ENCODE measurements at regions of chr6 and their contacts with region 1.

Region 1: GRCh38 chr6:89297695-89298351 is 17.3 kb downstream of the GABRR2 start:
- DNase-seq: peak; percentile 97
- H3K4me3 ChIP-seq: peak overlapping the region in 1 of 3 experiments; percentile 47
- H3K27ac ChIP-seq: peak overlapping the region; percentile 84
- H3K4me1 ChIP-seq: peaks cover 28% of the 10 kb centered on the region
- H3K27me3 ChIP-seq: no peaks in the 10 kb centered on the region
- CTCF ChIP-seq: no peak
- POLR2A ChIP-seq: no peak

Region 2: DNA sequence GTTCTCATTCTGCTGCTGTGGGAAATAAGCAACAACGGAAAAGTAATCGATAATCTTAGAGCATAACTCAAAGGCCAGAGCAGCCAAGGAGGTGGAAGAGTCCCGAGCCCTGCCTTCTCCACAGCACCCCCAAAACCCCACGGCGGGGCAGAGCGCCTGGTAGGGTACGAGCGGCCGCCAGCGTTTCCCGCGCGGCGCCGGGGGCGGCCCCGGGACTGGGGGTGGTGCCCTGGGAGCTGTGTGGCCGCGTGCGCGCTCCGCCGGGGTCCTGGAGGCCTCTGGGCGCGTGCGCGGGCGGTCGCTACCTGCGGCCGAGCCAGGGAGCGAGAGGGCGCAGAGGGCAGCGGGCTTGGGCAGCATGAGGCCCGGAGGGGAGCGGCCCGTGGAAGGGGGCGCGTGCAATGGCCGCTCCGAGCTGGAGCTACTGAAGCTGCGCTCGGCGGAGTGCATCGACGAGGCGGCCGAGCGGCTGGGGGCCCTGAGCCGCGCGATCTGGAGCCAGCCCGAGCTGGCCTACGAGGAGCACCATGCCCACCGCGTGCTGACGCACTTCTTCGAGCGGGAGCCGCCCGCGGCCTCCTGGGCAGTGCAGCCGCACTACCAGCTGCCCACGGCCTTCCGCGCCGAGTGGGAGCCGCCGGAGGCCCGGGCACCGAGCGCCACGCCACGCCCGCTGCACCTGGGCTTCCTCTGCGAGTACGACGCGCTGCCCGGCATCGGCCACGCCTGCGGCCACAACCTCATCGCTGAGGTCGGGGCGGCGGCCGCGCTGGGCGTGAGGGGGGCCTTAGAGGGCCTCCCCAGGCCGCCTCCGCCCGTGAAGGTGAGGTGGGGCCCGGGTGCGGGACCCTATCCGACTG is 151.8 kb before region 1 on chr6 and contains the start of gene PM20D2:
- CTCF ChIA-PET with region 1: interaction called, 6 read pairs
- POLR2A ChIA-PET with region 1: no interaction called
- dilution Hi-C with region 1: no loop called
- intact Hi-C with region 1: loop called (anchors 2 kb)
- DNase-seq: peak; percentile 63
- H3K4me3 ChIP-seq: peak within 1 kb of the TSS; percentile 52 to 83 (median 79)
- H3K27ac ChIP-seq: peak within 1 kb of the TSS; percentile 72
- H3K4me1 ChIP-seq: peaks cover 10% of the 10 kb centered on the region
- H3K27me3 ChIP-seq: peaks cover 5 to 7% of the 10 kb centered on the region in 2 experiments
- CTCF ChIP-seq: no peak
- POLR2A ChIP-seq: peak; percentile 44
- total RNA-seq, gene PM20D2: 8.3 and 10.9 TPM in 2 replicates

Region 3: DNA sequence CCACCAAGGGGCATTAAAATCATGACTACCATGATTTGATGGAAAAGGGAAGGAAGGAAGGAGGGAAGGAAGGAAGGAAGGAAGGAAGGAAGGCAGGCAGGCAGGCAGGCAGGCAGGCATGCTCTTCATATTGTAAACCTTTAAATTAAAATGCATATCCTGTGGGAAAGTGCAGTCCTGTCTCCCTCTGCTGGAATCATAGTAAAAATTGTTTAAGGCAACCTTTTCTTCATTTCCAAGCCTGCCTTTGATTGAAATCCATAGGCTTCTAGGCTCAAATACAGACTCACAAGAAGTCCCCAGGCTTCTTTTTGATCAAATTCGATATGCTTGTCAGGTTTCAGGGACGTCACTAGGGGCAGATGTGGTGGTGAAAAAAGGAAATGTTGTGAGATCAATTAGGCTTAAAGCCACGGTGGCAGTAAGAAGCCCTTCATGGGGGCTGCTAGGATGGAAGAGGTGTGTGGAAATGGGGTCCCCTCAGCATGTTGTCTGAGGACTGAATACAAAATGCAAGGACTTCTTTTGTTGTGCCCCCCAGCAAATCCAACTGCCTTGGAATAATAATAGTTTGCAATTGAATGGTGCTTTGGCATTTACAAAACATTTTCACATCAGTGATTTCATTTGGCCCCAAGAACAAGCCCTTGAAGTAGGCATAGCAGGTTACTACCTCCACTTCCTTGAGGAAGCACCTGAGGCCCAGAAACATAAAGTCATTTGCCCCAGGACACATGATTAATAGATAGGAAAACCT is 55.1 kb before region 1 on chr6:
- CTCF ChIA-PET with region 1: interaction called, 4 read pairs
- POLR2A ChIA-PET with region 1: no interaction called
- dilution Hi-C with region 1: no loop called
- intact Hi-C with region 1: loop called (anchors 2 kb)
- DNase-seq: peak; percentile 60
- H3K4me3 ChIP-seq: no peak overlapping the region
- H3K27ac ChIP-seq: no peak overlapping the region
- H3K4me1 ChIP-seq: no peaks in the 10 kb centered on the region
- H3K27me3 ChIP-seq: peaks cover 16 to 23% of the 10 kb centered on the region in 2 experiments
- CTCF ChIP-seq: peak; percentile 36 to 43
- POLR2A ChIP-seq: no peak

Region 4: GRCh38 chr6:89254569-89254968 is 43.3 kb before region 1 on chr6:
- CTCF ChIA-PET with region 1: interaction called, 3 read pairs
- POLR2A ChIA-PET with region 1: no interaction called
- dilution Hi-C with region 1: no loop called
- intact Hi-C with region 1: loop called (anchors 1 kb)
- DNase-seq: peak; percentile 75
- H3K4me3 ChIP-seq: no peak overlapping the region
- H3K27ac ChIP-seq: peak overlapping the region; percentile 34
- H3K4me1 ChIP-seq: peaks cover 24% of the 10 kb centered on the region
- H3K27me3 ChIP-seq: no peaks in the 10 kb centered on the region
- CTCF ChIP-seq: no peak
- POLR2A ChIP-seq: no peak

Region 5: GRCh38 chr6:89281779-89282246 is 16.0 kb before region 1 on chr6:
- CTCF ChIA-PET with region 1: interaction called, 14 read pairs
- POLR2A ChIA-PET with region 1: no interaction called
- dilution Hi-C with region 1: no loop called
- intact Hi-C with region 1: no loop called
- DNase-seq: peak; percentile 47
- H3K4me3 ChIP-seq: no peak overlapping the region
- H3K27ac ChIP-seq: no peak overlapping the region
- H3K4me1 ChIP-seq: no peaks in the 10 kb centered on the region
- H3K27me3 ChIP-seq: peaks cover 0 to 2% of the 10 kb centered on the region in 2 experiments
- CTCF ChIP-seq: peak; percentile 67 to 69
- POLR2A ChIP-seq: no peak

Region 6: GRCh38 chr6:89311853-89312531 is 14.2 kb after region 1 on chr6:
- CTCF ChIA-PET with region 1: interaction called, 47 read pairs
- POLR2A ChIA-PET with region 1: interaction called, 8 read pairs
- dilution Hi-C with region 1: no loop called
- intact Hi-C with region 1: loop called (anchors 1 kb)
- DNase-seq: peak; percentile 95
- H3K4me3 ChIP-seq: no peak overlapping the region
- H3K27ac ChIP-seq: peak overlapping the region; percentile 67
- H3K4me1 ChIP-seq: peaks cover 22% of the 10 kb centered on the region
- H3K27me3 ChIP-seq: no peaks in the 10 kb centered on the region
- CTCF ChIP-seq: peak; percentile 51 to 81
- POLR2A ChIP-seq: no peak

Region 7: DNA sequence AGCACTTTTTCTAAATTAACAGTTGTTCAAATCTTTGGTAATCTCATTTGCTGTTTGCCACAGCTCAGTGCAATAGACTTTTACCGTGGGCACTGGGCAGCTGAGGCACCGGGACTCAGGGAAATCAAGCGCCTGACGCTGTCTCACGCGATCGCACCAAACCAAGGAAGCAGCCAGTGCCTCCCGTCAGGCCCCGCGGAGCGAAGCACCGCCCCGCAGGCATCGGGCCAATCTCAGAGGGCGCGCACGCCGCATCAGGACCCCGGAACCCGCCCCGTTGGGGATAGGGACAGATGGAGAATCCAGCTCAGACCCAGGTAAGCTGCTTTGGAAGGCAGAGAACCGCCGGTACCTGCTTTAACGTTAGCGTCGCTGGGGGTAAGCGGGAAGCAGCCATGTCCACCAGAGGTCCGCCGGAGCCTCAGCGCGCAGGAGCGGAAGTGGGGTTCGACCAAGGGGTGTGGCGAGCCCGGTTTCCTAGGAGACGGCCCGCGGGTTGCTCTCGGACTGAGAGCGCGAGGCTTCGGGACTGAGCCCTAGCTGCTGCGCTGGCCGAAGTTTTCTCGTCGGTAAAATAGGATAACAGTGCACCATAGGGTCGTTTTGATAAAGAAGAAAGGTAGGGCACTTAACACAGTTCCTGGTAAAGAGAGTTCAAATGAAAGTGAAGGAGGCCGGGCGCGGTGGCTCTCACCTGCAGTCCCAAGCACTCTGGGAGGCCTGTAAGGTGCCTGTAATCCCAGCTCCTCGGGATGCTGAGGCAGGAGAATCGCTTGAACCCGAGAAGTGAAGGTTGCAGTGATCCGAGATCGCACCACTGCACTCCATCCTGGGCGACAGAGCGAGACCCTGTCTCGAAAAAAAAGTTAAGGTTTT is 340.7 kb after region 1 on chr6 and contains the start of gene LYRM2:
- CTCF ChIA-PET with region 1: no interaction called
- POLR2A ChIA-PET with region 1: no interaction called
- dilution Hi-C with region 1: no loop called
- intact Hi-C with region 1: loop called (anchors 2 kb)
- DNase-seq: peak; percentile 96
- H3K4me3 ChIP-seq: peak within 1 kb of the TSS; percentile 80 to 84 (median 83)
- H3K27ac ChIP-seq: peak within 1 kb of the TSS; percentile 92
- H3K4me1 ChIP-seq: peaks cover 12% of the 10 kb centered on the region
- H3K27me3 ChIP-seq: no peaks in the 10 kb centered on the region
- CTCF ChIP-seq: no peak
- POLR2A ChIP-seq: peak; percentile 85
- total RNA-seq, gene LYRM2: 37.7 and 41.9 TPM in 2 replicates

Region 8: GRCh38 chr6:89711801-89712200 is 414.0 kb after region 1 on chr6:
- CTCF ChIA-PET with region 1: no interaction called
- POLR2A ChIA-PET with region 1: no interaction called
- dilution Hi-C with region 1: no loop called
- intact Hi-C with region 1: no loop called
- DNase-seq: no peak
- H3K4me3 ChIP-seq: no peak overlapping the region
- H3K27ac ChIP-seq: no peak overlapping the region
- H3K4me1 ChIP-seq: no peaks in the 10 kb centered on the region
- H3K27me3 ChIP-seq: no peaks in the 10 kb centered on the region
- CTCF ChIP-seq: no peak
- POLR2A ChIP-seq: no peak

Measured in endothelial cell of umbilical vein (primary cell).